ENCODE measurements at regions of chr15 and their contacts with region 1.

Region 1: DNA sequence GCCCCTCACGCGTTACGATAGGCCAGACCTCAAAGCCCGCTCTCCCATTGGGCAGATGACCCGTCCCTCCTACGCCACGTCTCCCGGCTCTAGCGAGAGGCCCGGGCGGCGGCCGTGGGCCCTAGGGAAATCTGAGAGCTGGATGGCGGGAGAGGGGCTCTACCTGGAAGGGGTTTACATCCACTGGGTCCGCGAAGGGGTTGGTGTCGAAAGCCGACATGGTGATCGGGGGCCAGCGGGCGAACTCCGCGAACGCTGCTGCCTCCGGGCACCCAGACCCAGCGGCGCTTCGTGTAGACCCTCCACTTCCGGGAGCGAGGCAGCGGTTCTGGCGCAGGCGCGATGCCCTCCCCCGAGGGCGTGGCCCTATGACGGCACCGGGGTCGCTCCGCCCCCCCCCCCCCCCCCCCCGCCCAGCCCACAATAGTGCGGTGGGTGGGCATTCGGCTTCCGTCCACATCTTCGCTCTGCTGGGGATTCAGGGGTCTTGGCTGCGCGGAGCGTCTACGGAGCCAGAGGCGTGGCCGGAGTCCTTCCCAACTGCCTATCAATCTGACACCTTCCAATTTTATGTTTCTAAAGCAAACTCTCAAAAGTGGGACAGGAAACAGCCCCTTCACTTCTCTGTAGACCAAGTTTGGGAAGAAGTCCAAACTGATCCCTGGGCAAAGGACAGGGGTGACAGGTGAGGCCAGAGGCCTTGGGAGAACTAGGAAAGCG is at the start of gene SCAMP2:
- DNase-seq: peak; percentile 91
- ATAC-seq: peak; percentile 98
- H3K4me3 ChIP-seq: peak within 1 kb of the TSS; percentile 83 to 98 (median 98)
- H3K27ac ChIP-seq: peak within 1 kb of the TSS; percentile 93
- H3K4me1 ChIP-seq: peaks cover 48% of the 10 kb centered on the region
- H3K27me3 ChIP-seq: peaks cover 0 to 10% of the 10 kb centered on the region in 2 experiments; a peak in 1 of 5 replicates
- CTCF ChIP-seq: no peak
- EP300 ChIP-seq: 0 out of 4 replicates have a peak, but pooled peaks of 1 of the 2 experiments have one; percentile 40
- POLR2A ChIP-seq: peak; percentile 92 to 93
- RAD21 ChIP-seq: peak; percentile 27; the same call in 1 of the 2 replicates
- total RNA-seq, gene SCAMP2: 23.6 and 34.8 TPM in 2 replicates

Region 2: GRCh38 chr15:74850393-74850792 is 22.8 kb before region 1 on chr15:
- CTCF ChIA-PET with region 1: no interaction called
- POLR2A ChIA-PET with region 1: no interaction called
- in situ Hi-C with region 1: no loop called
- intact Hi-C with region 1: no loop called
- DNase-seq: no peak
- ATAC-seq: no peak
- H3K4me3 ChIP-seq: no peak overlapping the region
- H3K27ac ChIP-seq: no peak overlapping the region
- H3K4me1 ChIP-seq: peaks cover 11% of the 10 kb centered on the region; the same call in 1 of the 2 replicates
- H3K27me3 ChIP-seq: no peaks in the 10 kb centered on the region
- CTCF ChIP-seq: no peak
- EP300 ChIP-seq: no peak
- POLR2A ChIP-seq: no peak
- RAD21 ChIP-seq: no peak

Region 3: GRCh38 chr15:74889883-74890664 is 16.9 kb after region 1 on chr15 and contains the start of gene MPI:
- CTCF ChIA-PET with region 1: no interaction called
- POLR2A ChIA-PET with region 1: interaction called, 10 read pairs
- in situ Hi-C with region 1: no loop called
- intact Hi-C with region 1: no loop called
- DNase-seq: peak; percentile 75
- ATAC-seq: peak; percentile 96
- H3K4me3 ChIP-seq: peak within 1 kb of the TSS; percentile 73 to 99 (median 94)
- H3K27ac ChIP-seq: peak within 1 kb of the TSS; percentile 70
- H3K4me1 ChIP-seq: peaks cover 31% of the 10 kb centered on the region
- H3K27me3 ChIP-seq: no peaks in the 10 kb centered on the region; a peak in 1 of 5 replicates
- CTCF ChIP-seq: no peak
- EP300 ChIP-seq: no peak
- POLR2A ChIP-seq: peak; percentile 92 to 98
- RAD21 ChIP-seq: peak; percentile 36; the same call in 1 of the 2 replicates
- total RNA-seq, gene MPI: 36.9 and 49.7 TPM in 2 replicates

Region 4: GRCh38 chr15:74897300-74897701 is 24.1 kb after region 1 on chr15:
- CTCF ChIA-PET with region 1: no interaction called
- POLR2A ChIA-PET with region 1: interaction called, 10 read pairs
- in situ Hi-C with region 1: no loop called
- intact Hi-C with region 1: no loop called
- DNase-seq: no peak
- ATAC-seq: peak; percentile 13; the same call in 2 of the 3 replicates
- H3K4me3 ChIP-seq: no peak overlapping the region
- H3K27ac ChIP-seq: no peak overlapping the region
- H3K4me1 ChIP-seq: peaks cover 10% of the 10 kb centered on the region; the same call in 1 of the 2 replicates
- H3K27me3 ChIP-seq: no peaks in the 10 kb centered on the region
- CTCF ChIP-seq: no peak
- EP300 ChIP-seq: no peak
- POLR2A ChIP-seq: no peak; a peak in 2 of 4 replicates
- RAD21 ChIP-seq: no peak